K562 (cell line): ENCODE measurements at regions of chr9 and their contacts with region 1.

Region 1: DNA sequence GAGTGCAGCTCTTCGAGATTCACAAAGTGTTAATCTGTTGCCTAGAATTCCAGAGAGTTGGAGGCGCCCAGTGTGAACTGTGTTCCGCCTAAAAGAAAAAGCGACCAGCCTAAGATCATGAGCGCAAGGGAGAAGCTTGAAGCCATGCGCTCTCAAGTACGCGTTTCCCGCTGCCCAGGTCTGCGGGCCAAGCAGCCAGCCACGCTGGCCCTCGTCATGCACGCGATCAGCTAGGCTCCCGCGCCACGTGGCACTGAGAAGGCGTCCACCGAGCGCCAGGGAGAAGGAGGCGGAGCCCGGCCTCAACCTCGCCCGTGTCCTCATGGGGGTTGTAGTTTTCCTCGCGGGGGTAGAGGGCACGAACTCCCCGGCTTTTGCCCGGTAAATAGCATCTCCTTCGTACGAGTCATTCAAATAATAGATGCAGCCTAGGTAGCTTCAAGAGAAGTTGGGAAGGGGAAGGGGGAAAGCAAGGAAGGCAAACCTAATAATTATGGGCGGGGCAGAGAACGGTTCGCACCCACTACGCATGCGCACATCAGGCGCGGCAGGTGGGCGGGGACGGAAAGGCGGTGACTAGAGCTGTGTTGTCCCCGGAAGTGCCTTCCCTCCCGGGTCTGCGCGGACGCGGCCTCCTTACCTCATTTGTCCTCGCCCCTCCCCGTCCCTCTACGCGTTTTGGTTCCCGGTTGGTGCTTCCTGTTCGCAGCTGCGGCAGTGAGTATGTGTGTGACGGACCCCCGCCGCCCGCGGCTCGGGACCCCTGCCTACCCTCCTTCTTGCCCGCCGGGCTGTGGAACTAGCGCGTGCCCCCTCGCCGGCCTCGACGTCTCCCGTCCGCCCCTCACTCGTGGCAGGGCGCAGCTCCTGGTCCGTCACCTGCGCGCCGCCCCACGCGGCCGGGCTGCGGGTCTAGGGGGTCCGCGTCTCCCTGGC is at the start of gene ZCCHC7:
- DNase-seq: peak; percentile 98 to 99 (median 99)
- ATAC-seq: peak; percentile 97
- H3K4me3 ChIP-seq: peak within 1 kb of the TSS; percentile 78
- H3K27ac ChIP-seq: peak within 1 kb of the TSS; percentile 87
- H3K4me1 ChIP-seq: peaks cover 11 to 14% of the 10 kb centered on the region in 2 experiments; a peak in 4 of 5 replicates
- H3K27me3 ChIP-seq: no peaks in the 10 kb centered on the region
- CTCF ChIP-seq: peak in 1 of 3 experiments; percentile 0; a peak in 1 of 6 replicates
- EP300 ChIP-seq: peak; percentile 30; the same call in 1 of the 2 replicates
- POLR2A ChIP-seq: peak; percentile 96
- RAD21 ChIP-seq: peak; percentile 15; a peak in 1 of 4 replicates
- polyA plus RNA-seq, gene ZCCHC7: 46.7 to 63.9 TPM

Region 2: GRCh38 chr9:37134166-37134565 is 14.0 kb after region 1 on chr9:
- CTCF ChIA-PET with region 1: no interaction called
- POLR2A ChIA-PET with region 1: interaction called, 14 read pairs
- in situ Hi-C with region 1: no loop called
- intact Hi-C with region 1: no loop called
- DNase-seq: no peak
- ATAC-seq: no peak
- H3K4me3 ChIP-seq: no peak overlapping the region
- H3K27ac ChIP-seq: no peak overlapping the region
- H3K4me1 ChIP-seq: peaks cover 0 to 6% of the 10 kb centered on the region in 2 experiments; a peak in 1 of 5 replicates
- H3K27me3 ChIP-seq: no peaks in the 10 kb centered on the region
- CTCF ChIP-seq: no peak
- EP300 ChIP-seq: no peak
- POLR2A ChIP-seq: no peak
- RAD21 ChIP-seq: no peak

Region 3: GRCh38 chr9:37197158-37198038 is 77.2 kb after region 1 on chr9:
- CTCF ChIA-PET with region 1: no interaction called
- POLR2A ChIA-PET with region 1: interaction called, 16 read pairs
- in situ Hi-C with region 1: no loop called
- intact Hi-C with region 1: loop called (anchors 5 kb)
- DNase-seq: peak; percentile 82 to 96 (median 90)
- ATAC-seq: peak; percentile 83
- H3K4me3 ChIP-seq: peak overlapping the region; percentile 5; the same call in 1 of the 2 replicates
- H3K27ac ChIP-seq: peak overlapping the region; percentile 62
- H3K4me1 ChIP-seq: peaks cover 23 to 65% of the 10 kb centered on the region in 2 experiments
- H3K27me3 ChIP-seq: no peaks in the 10 kb centered on the region
- CTCF ChIP-seq: no peak
- EP300 ChIP-seq: peak; percentile 99
- POLR2A ChIP-seq: no peak
- RAD21 ChIP-seq: no peak

Region 4: GRCh38 chr9:37329576-37329975 is 209.4 kb after region 1 on chr9:
- CTCF ChIA-PET with region 1: no interaction called
- POLR2A ChIA-PET with region 1: no interaction called
- in situ Hi-C with region 1: no loop called
- intact Hi-C with region 1: loop called (anchors 10 kb)
- DNase-seq: peak in 2 of 4 experiments; percentile 17 to 53
- ATAC-seq: peak; percentile 75
- H3K4me3 ChIP-seq: no peak overlapping the region
- H3K27ac ChIP-seq: no peak overlapping the region
- H3K4me1 ChIP-seq: peaks cover 0 to 8% of the 10 kb centered on the region in 2 experiments; a peak in 1 of 5 replicates
- H3K27me3 ChIP-seq: no peaks in the 10 kb centered on the region
- CTCF ChIP-seq: peak; percentile 40 to 63 (median 45); a peak in 4 of 6 replicates
- EP300 ChIP-seq: no peak
- POLR2A ChIP-seq: no peak
- RAD21 ChIP-seq: peak; percentile 28 to 59; a peak in 3 of 4 replicates

Region 5: GRCh38 chr9:37806271-37806670 is 686.1 kb after region 1 on chr9:
- CTCF ChIA-PET with region 1: no interaction called
- POLR2A ChIA-PET with region 1: no interaction called
- in situ Hi-C with region 1: no loop called
- intact Hi-C with region 1: no loop called
- DNase-seq: peak in 1 of 4 experiments; percentile 17
- ATAC-seq: peak; percentile 31
- H3K4me3 ChIP-seq: no peak overlapping the region
- H3K27ac ChIP-seq: no peak overlapping the region
- H3K4me1 ChIP-seq: peaks cover 2 to 3% of the 10 kb centered on the region in 2 experiments; a peak in 4 of 5 replicates
- H3K27me3 ChIP-seq: no peaks in the 10 kb centered on the region
- CTCF ChIP-seq: peak in 2 of 3 experiments; percentile 7 to 15; a peak in 1 of 6 replicates
- EP300 ChIP-seq: no peak
- POLR2A ChIP-seq: no peak
- RAD21 ChIP-seq: no peak